ENCODE measurements at regions of chr18 and their contacts with region 1.

Region 1: DNA sequence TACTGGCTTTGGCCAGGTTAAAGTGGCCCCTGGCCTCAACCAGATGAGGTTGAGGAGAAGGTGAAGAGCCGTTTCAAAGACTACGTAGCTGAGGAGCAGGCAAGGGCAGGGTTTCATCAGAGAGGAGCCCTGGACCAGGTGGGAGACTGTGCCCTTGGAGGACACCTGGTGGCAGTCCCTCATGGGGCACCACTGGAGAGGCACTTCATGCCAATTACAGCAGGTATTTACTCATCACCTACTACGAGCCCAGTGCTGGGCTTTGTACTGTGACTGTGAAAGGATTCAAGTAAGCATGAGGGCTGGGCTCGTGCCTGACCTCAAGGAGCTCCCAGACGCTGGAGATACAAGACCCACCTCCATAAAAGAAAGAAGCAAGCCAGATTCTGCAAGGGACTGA is 37.6 kb downstream of the SMAD7 start:
- DNase-seq: peak in 7 of 9 experiments; percentile 33 to 76 (median 54)
- ATAC-seq: peak; percentile 67
- H3K4me3 ChIP-seq: no peak overlapping the region
- H3K4me3 Mint-ChIP-seq: no peak overlapping the region
- H3K27ac ChIP-seq: no peak overlapping the region
- H3K27ac Mint-ChIP-seq: no peak overlapping the region
- H3K4me1 ChIP-seq: peaks cover 18% of the 10 kb centered on the region
- H3K4me1 Mint-ChIP-seq: peaks cover 31% of the 10 kb centered on the region
- H3K27me3 ChIP-seq: no peaks in the 10 kb centered on the region
- H3K27me3 Mint-ChIP-seq: no peaks in the 10 kb centered on the region
- CTCF ChIP-seq: peak; percentile 41

Region 2: GRCh38 chr18:48842259-48843061 is 70.7 kb before region 1 on chr18:
- CTCF ChIA-PET with region 1: interaction called, 3 read pairs
- POLR2A ChIA-PET with region 1: no interaction called
- intact Hi-C with region 1: loop called (anchors 5 kb)
- DNase-seq: peak; percentile 34 to 90 (median 65)
- ATAC-seq: peak; percentile 78
- H3K4me3 ChIP-seq: peak overlapping the region in 1 of 2 experiments; percentile 47
- H3K4me3 Mint-ChIP-seq: peak overlapping the region; percentile 54
- H3K27ac ChIP-seq: peak overlapping the region; percentile 72 to 90
- H3K27ac Mint-ChIP-seq: peak overlapping the region; percentile 80
- H3K4me1 ChIP-seq: peaks cover 67% of the 10 kb centered on the region
- H3K4me1 Mint-ChIP-seq: peaks cover 74% of the 10 kb centered on the region
- H3K27me3 ChIP-seq: no peaks in the 10 kb centered on the region
- H3K27me3 Mint-ChIP-seq: no peaks in the 10 kb centered on the region
- CTCF ChIP-seq: no peak

Region 3: DNA sequence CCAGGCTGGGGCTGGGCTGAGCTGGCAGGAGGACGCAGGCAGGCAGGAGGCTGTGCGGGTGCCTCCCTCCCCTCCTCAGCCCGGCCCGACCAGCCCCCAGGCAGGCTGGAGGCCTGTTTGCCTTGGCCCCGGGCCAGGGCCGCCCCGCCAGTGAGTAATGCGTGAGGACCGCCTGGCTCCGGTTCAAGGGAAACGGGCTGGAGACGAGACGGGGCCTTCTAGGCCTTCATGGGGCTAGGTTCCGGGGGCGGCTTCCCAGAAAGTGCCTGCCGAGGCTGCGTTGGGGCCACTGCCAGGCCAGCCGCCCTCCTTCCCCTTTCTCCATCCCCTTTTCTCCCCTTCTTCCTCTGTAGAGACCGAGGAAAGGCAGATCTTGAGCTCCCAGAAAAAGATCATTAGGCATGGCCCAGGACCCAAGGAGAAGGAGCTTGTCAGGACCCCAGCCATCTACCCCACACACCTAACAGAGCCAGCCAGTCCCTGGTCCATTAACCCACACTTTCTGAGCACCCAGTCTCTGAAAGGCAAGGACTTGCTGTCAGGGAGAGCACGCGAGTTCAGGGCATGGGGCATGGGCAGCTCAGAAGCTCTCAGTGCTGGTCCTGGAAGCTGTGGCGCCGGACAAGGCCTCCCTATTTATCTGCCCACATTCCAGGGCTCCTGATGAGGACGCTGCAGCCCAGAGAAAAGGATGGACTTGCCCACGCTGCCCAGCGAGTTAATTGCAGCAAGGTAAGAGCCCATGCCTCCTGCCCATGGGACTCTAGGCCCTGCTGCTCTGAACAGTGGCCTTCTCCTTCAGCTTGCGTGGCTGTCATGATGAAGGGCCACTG is 11.0 kb before region 1 on chr18:
- CTCF ChIA-PET with region 1: interaction called, 13 read pairs
- POLR2A ChIA-PET with region 1: no interaction called
- intact Hi-C with region 1: no loop called
- DNase-seq: no peak
- ATAC-seq: no peak
- H3K4me3 ChIP-seq: no peak overlapping the region
- H3K4me3 Mint-ChIP-seq: no peak overlapping the region
- H3K27ac ChIP-seq: no peak overlapping the region
- H3K27ac Mint-ChIP-seq: no peak overlapping the region
- H3K4me1 ChIP-seq: peaks cover 6% of the 10 kb centered on the region
- H3K4me1 Mint-ChIP-seq: peaks cover 10% of the 10 kb centered on the region
- H3K27me3 ChIP-seq: no peaks in the 10 kb centered on the region
- H3K27me3 Mint-ChIP-seq: no peaks in the 10 kb centered on the region
- CTCF ChIP-seq: no peak

Measured in CD8-positive, alpha-beta T cell (primary cell).